ENCODE measurements at regions of chr17 and their contacts with region 1.

Region 1: DNA sequence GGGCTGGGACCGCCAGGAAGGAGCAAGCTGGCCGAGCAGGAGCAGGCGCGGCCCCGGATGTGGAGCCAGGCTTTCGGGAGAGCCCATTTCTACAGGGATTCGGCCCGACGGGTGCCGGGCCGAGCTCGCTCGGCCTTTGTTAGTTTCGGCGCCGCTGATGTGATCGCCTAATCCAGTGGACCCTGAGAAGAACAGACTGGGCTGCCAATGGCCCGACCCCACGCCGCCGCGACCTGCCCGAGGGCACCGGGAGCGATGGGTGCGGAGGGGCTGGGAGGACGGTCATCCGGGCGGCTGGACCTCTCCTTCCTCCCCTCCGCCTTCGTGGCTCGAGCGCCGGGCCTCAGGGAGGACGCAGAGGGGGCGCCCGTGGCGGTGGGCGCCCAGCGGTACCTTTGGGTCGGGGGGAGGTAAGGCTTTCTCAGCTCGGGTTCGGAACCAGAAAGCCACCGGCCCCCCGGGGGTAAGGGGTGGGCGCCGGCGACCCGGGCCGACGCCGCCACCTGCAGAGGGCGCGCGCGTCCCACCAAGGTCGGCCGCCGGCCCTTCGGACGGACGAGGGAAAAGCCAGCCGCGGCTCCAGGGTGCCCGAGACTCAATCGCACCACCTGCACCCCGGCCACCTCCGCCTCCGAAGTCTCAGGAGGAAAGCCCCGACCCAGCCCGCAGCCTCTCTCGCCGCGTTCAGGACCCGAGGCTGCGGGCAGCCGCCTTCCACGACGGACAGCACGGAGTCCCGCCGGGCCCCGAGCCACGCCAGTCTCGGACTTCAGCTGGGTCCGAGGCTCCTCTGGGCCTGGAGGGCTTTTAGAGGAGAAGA is 7.1 kb downstream of the CBX8 start:
- DNase-seq: peak; percentile 57
- ATAC-seq: peak; percentile 54
- H3K4me3 Mint-ChIP-seq: no peak overlapping the region
- H3K27ac Mint-ChIP-seq: no peak overlapping the region
- H3K4me1 Mint-ChIP-seq: peaks cover 11% of the 10 kb centered on the region
- H3K27me3 Mint-ChIP-seq: peaks cover 43% of the 10 kb centered on the region
- CTCF ChIP-seq: peak; percentile 25

Region 2: DNA sequence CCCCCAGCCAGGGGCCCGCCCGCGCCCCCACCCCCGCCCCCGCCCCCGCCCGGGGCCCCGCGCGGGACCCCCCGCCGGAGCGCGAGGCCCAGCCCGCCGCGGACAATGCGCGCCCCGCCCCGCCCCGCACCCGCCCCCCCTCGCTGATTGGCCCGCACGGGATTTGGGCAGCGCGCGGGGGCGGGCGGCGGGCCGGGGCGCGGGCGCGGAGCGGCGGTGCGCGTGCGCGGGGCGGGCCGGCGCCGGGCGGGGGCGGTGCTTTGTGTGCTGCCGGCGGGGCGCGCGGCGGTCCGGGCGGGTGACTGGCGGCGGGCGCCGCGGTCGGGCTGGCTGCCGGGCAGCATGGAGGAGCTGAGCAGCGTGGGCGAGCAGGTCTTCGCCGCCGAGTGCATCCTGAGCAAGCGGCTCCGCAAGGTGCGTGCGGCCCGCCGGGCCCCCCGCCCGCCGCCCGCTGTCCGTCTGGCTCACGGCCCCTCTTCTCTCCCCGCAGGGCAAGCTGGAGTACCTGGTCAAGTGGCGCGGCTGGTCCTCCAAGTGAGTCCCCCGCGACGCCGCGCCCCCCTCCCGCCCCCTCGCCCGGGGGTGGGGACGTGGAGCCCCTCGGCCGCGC is 11.7 kb before region 1 on chr17 and contains the start of gene CBX2:
- CTCF ChIA-PET with region 1: interaction called, 4 read pairs
- POLR2A ChIA-PET with region 1: interaction called, 4 read pairs
- intact Hi-C with region 1: loop called (anchors 1 kb)
- DNase-seq: peak; percentile 83
- ATAC-seq: peak; percentile 93
- H3K4me3 Mint-ChIP-seq: peak within 1 kb of the TSS; percentile 82
- H3K27ac Mint-ChIP-seq: no peak within 1 kb of the TSS
- H3K4me1 Mint-ChIP-seq: peaks cover 14% of the 10 kb centered on the region
- H3K27me3 Mint-ChIP-seq: peaks cover 65% of the 10 kb centered on the region
- CTCF ChIP-seq: no peak
- total RNA-seq, gene CBX2: 0.37 and 0.67 TPM in 2 replicates

Region 3: DNA sequence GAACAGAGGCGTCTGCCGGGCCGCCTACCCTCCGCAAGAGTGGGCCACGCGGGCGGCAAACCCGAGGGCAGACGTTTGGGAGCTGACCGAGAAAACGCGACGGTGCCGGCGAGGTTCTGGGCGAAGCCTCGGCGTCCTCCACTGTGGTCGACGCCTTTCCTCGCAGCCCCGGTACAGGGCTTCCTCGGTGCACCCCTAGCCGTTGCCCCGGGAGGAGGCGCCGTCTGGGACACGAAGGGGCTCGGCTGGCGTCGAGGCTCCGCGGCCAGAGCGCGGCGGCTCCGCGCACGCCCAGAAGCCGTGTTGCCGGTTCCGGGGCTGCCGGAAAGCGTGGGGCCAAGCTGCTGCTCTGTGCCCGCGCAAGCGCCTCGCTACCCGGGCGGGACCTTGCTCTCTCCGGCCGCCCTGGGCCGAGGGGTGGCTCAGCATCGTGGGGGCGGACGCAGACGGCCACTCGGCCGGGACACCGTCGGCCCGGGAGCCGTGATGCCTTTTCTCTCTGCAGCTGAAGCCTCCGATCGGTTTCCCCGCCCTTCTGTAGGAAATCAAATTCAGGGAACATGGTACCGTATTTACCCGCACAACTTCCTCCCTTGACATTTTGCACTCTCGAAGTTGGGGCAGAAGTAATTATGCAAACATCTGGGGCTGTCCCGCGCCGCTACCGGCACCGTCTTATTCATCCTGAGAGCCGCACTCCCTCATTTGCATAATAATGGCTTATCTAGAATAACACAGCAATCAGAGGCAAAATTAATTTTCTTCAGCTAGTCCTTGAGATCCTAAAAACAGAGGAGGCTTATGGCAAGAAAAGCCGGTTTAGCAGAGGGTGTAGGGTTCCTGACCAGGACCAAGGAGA is 14.5 kb after region 1 on chr17:
- CTCF ChIA-PET with region 1: interaction called, 3 read pairs
- POLR2A ChIA-PET with region 1: interaction called, 10 read pairs
- intact Hi-C with region 1: loop called (anchors 1 kb)
- DNase-seq: peak; percentile 65
- ATAC-seq: peak; percentile 87
- H3K4me3 Mint-ChIP-seq: peak overlapping the region; percentile 81
- H3K27ac Mint-ChIP-seq: peak overlapping the region; percentile 91
- H3K4me1 Mint-ChIP-seq: peaks cover 43% of the 10 kb centered on the region
- H3K27me3 Mint-ChIP-seq: peaks cover 61% of the 10 kb centered on the region
- CTCF ChIP-seq: no peak

Region 4: GRCh38 chr17:79970576-79971068 is 180.9 kb after region 1 on chr17:
- CTCF ChIA-PET with region 1: interaction called, 10 read pairs
- POLR2A ChIA-PET with region 1: no interaction called
- intact Hi-C with region 1: loop called (anchors 1 kb)
- DNase-seq: no peak
- ATAC-seq: peak; percentile 60
- H3K4me3 Mint-ChIP-seq: no peak overlapping the region
- H3K27ac Mint-ChIP-seq: no peak overlapping the region
- H3K4me1 Mint-ChIP-seq: peaks cover 29% of the 10 kb centered on the region
- H3K27me3 Mint-ChIP-seq: no peaks in the 10 kb centered on the region
- CTCF ChIP-seq: no peak

Region 5: DNA sequence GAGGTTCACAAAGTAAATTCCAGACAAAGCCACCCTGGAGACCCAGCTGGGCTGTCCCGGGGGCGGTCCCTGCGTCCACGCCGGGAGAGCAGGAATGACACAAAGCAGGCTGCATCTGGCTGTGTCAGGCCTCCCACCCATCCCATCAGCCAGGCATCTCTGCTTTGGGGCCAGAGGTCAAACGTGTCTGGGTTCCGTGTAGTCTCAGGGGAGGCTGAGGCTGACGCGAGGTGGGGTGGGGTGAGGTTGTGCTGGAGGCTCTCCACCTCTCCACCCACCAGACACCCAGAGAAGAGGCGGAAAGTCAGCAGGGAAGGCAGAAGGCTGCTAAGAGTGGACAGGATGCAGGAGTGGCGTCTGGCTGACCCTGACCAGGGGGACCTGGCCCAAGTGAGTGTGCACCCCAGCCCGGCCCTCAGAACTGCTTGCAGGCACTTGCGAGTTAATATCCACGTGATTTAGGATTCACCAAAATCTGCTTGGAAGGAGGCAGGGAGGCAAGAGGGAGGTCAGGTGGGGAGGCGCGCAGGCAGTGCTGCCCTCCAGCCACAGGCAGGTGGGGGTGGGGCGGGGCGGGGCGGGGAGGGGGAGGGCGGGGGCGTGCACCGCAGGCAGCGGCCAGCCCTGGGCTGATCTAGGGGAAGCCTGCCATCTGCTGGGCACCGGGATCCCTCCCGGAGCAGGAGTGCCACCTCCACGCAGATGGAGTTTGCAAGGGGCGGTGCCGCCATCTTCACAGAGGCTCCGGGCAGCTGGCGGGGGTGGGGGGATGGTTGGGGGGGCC is 201.6 kb after region 1 on chr17:
- CTCF ChIA-PET with region 1: interaction called, 6 read pairs
- POLR2A ChIA-PET with region 1: no interaction called
- intact Hi-C with region 1: loop called (anchors 1 kb)
- DNase-seq: peak; percentile 67
- ATAC-seq: peak; percentile 91
- H3K4me3 Mint-ChIP-seq: peak overlapping the region; percentile 69
- H3K27ac Mint-ChIP-seq: no peak overlapping the region
- H3K4me1 Mint-ChIP-seq: peaks cover 35% of the 10 kb centered on the region
- H3K27me3 Mint-ChIP-seq: peaks cover 2% of the 10 kb centered on the region
- CTCF ChIP-seq: no peak

Measured in activated B cell treated with CpG ODN at 0.5 μM for 24 hours (primary cell).